ENCODE measurements at regions of chr15 and their contacts with region 1.

Region 1: DNA sequence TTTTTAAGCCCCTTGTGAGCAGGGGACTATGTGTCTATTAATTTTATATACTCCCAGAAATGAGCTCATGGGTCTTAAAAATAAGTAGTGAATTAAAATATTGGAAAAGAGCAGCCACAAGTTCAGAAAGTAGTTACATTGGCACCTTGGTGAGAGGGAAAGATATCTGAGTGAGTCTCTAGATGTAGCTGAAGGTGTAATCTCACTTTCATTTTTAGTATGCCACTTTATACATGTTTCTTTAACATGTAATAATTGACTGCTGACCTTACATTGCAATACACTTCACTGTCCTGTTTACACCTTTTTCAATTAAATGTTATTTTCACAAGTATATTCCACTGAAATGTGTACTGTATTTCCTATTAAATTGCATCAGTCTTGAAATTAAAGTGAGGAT is 12.1 kb upstream of the PAK6 start:
- DNase-seq: no peak
- H3K4me3 ChIP-seq: no peak overlapping the region
- H3K27ac ChIP-seq: no peak overlapping the region
- H3K4me1 ChIP-seq: no peaks in the 10 kb centered on the region
- H3K27me3 ChIP-seq: no peaks in the 10 kb centered on the region
- CTCF ChIP-seq: no peak
- EP300 ChIP-seq: no peak
- POLR2A ChIP-seq: no peak
- RAD21 ChIP-seq: no peak

Region 2: GRCh38 chr15:40190591-40190990 is 36.1 kb before region 1 on chr15:
- CTCF ChIA-PET with region 1: no interaction called
- POLR2A ChIA-PET with region 1: no interaction called
- DNase-seq: no peak
- H3K4me3 ChIP-seq: no peak overlapping the region
- H3K27ac ChIP-seq: no peak overlapping the region
- H3K4me1 ChIP-seq: no peaks in the 10 kb centered on the region
- H3K27me3 ChIP-seq: no peaks in the 10 kb centered on the region
- CTCF ChIP-seq: no peak
- EP300 ChIP-seq: no peak
- POLR2A ChIP-seq: no peak
- RAD21 ChIP-seq: no peak

Region 3: DNA sequence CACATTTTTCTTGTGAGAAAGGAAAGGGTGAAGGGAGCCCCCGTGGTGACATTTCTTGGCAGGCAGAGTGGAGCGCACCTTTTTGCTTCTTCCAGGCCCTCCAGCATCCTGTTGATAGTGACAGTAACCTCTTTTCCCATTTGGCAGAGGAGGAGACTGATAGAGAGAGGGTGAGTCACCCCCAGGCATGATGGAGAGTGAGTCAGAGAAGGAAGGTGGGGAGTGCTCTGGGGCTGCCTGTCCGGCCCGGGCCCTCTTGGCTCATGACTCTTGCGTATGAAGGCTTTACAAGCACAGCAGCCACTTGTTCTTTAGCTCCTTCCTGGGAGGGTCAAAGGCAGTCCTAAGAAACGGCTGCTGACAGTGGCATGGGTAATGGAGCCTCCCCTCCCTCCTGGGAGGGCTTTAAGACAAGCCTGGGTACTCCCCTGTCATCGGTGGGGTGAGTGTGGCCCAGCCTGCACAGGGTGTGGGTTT is 40.1 kb after region 1 on chr15:
- CTCF ChIA-PET with region 1: interaction called, 1,340 read pairs
- POLR2A ChIA-PET with region 1: interaction called, 11 read pairs
- DNase-seq: no peak
- H3K4me3 ChIP-seq: no peak overlapping the region
- H3K27ac ChIP-seq: no peak overlapping the region
- H3K4me1 ChIP-seq: peaks cover 0 to 4% (median under 1%) of the 10 kb centered on the region in 4 experiments; a peak in 4 of 7 replicates
- H3K27me3 ChIP-seq: no peaks in the 10 kb centered on the region
- CTCF ChIP-seq: no peak
- EP300 ChIP-seq: no peak
- POLR2A ChIP-seq: no peak
- RAD21 ChIP-seq: no peak

Region 4: DNA sequence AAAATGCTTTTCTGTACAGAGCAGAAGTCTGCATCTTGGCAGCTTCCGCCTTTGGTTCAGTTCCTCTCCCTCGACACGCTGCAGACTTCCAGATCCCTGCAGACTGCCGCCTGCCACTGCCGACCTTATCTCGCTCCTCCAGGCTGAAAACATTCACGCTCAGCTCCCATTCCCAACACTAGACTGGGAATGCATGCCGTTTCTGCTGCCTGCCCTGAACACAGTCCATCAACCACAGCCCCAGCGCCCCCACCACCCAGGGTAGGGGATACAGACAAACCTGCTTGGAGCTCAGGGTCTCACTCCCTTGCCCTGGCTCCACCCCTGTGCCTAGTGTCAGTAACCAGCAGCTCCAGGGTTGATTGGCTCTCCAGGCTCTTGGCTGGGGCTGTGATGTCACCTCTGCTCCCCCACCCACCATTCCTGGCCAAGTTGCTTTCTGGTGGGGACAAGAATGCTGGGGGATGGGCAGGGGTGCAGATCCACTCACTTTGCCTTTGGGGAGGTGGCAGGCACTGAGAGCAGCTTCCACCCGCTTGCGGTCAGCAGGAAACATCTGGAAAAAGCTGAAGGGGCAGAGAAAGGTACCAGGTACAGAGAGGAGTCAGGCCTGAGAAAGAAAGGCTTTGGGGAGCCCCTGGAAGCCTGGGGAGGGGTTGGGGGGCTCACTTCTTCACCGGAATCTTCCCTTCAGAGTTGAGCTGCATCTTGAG is 74.9 kb after region 1 on chr15:
- CTCF ChIA-PET with region 1: no interaction called
- POLR2A ChIA-PET with region 1: no interaction called
- DNase-seq: peak in 1 of 2 experiments; percentile 75
- H3K4me3 ChIP-seq: no peak overlapping the region
- H3K27ac ChIP-seq: no peak overlapping the region
- H3K4me1 ChIP-seq: peaks cover 0 to 23% (median 10%) of the 10 kb centered on the region in 4 experiments; a peak in 6 of 7 replicates
- H3K27me3 ChIP-seq: peaks cover 0 to 2% (median 0%) of the 10 kb centered on the region in 4 experiments; a peak in 1 of 7 replicates
- CTCF ChIP-seq: no peak
- EP300 ChIP-seq: no peak
- POLR2A ChIP-seq: no peak
- RAD21 ChIP-seq: no peak